ENCODE measurements at regions of chr5 and their contacts with region 1.

Region 1: GRCh38 chr5:52799983-52800393 is 12.3 kb downstream of the ITGA1 start:
- DNase-seq: peak; percentile 93
- H3K4me3 ChIP-seq: peak overlapping the region; percentile 43 to 66
- H3K27ac ChIP-seq: peak overlapping the region; percentile 91
- H3K4me1 ChIP-seq: peaks cover 13% of the 10 kb centered on the region
- H3K27me3 ChIP-seq: no peaks in the 10 kb centered on the region
- CTCF ChIP-seq: no peak
- POLR2A ChIP-seq: peak; percentile 86

Region 2: GRCh38 chr5:51382763-51383490 is 1417.1 kb before region 1 on chr5 and contains the start of gene ISL1:
- intact Hi-C with region 1: loop called (anchors 10 kb)
- DNase-seq: peak; percentile 29
- H3K4me3 ChIP-seq: peak within 1 kb of the TSS; percentile 42 to 51
- H3K27ac ChIP-seq: peak within 1 kb of the TSS; percentile 83 to 90
- H3K4me1 ChIP-seq: no peaks in the 10 kb centered on the region
- H3K27me3 ChIP-seq: peaks cover 6% of the 10 kb centered on the region
- CTCF ChIP-seq: peak in 1 of 4 experiments; percentile 9
- POLR2A ChIP-seq: peak; percentile 95
- total RNA-seq, gene ISL1: 5.5 to 15.2 TPM

Region 3: GRCh38 chr5:52783226-52783959 is 16.6 kb before region 1 on chr5:
- intact Hi-C with region 1: no loop called
- DNase-seq: no peak
- H3K4me3 ChIP-seq: no peak overlapping the region
- H3K27ac ChIP-seq: no peak overlapping the region
- H3K4me1 ChIP-seq: no peaks in the 10 kb centered on the region
- H3K27me3 ChIP-seq: no peaks in the 10 kb centered on the region
- CTCF ChIP-seq: no peak
- POLR2A ChIP-seq: no peak

Region 4: DNA sequence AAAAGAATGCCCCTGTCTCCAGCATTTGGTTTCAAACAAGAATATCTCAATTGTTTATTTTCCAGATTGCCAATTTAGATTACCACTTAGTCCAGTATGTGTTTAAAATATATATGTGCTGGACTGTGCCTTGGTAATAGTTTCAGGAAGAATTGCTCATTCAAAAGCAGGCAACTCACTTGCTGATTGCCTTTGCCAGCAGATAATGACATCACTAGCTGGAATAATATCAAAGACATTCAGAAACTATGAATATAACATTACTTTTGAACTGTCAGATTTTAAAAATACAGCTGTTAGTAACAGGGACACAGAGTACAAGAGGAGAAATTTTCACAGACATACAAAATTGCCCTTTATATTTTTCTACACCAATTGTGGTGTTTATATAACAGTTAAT is 93.1 kb after region 1 on chr5:
- intact Hi-C with region 1: loop called (anchors 5 kb)
- DNase-seq: no peak
- H3K4me3 ChIP-seq: no peak overlapping the region
- H3K27ac ChIP-seq: peak overlapping the region in 1 of 2 donors; percentile 13
- H3K4me1 ChIP-seq: peaks cover 4% of the 10 kb centered on the region
- H3K27me3 ChIP-seq: no peaks in the 10 kb centered on the region
- CTCF ChIP-seq: no peak
- POLR2A ChIP-seq: no peak

Region 5: GRCh38 chr5:53892224-53892623 is 1092.2 kb after region 1 on chr5:
- intact Hi-C with region 1: loop called (anchors 10 kb)
- DNase-seq: no peak
- H3K4me3 ChIP-seq: no peak overlapping the region
- H3K27ac ChIP-seq: peak overlapping the region in 1 of 2 donors; percentile 38
- H3K4me1 ChIP-seq: no peaks in the 10 kb centered on the region
- H3K27me3 ChIP-seq: no peaks in the 10 kb centered on the region
- CTCF ChIP-seq: no peak
- POLR2A ChIP-seq: no peak

Region 6: DNA sequence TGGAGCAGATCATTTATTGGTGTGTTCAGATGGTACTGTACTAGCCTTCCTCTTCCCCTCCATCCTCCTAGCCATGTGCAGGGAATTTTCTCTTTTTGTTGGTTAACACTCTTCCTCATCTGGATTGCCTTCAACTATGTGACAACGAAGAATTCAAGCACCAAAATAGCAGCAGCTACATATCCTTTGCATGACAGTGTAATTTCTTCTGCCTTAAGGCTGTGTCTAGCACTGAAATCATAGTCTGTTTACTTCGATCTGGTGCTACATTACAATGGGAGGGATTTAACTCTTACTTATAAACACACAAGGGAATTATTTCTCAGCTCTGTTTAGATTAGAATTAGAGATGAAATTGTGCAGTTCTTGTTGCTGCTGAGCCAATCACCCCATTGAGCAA is 1250.0 kb after region 1 on chr5:
- intact Hi-C with region 1: no loop called
- DNase-seq: no peak
- H3K4me3 ChIP-seq: no peak overlapping the region
- H3K27ac ChIP-seq: no peak overlapping the region
- H3K4me1 ChIP-seq: no peaks in the 10 kb centered on the region
- H3K27me3 ChIP-seq: no peaks in the 10 kb centered on the region
- CTCF ChIP-seq: no peak
- POLR2A ChIP-seq: no peak

Measured in prostate gland (tissue), 2 donors.